ENCODE measurements at regions of chr1 and their contacts with region 1.

Region 1: GRCh38 chr1:14765773-14766172 is 167.3 kb downstream of the KAZN start:
- DNase-seq: peak; percentile 70
- H3K4me3 Mint-ChIP-seq: no peak overlapping the region
- H3K27ac Mint-ChIP-seq: peak overlapping the region; percentile 55
- H3K4me1 Mint-ChIP-seq: peaks cover 25% of the 10 kb centered on the region
- H3K27me3 Mint-ChIP-seq: no peaks in the 10 kb centered on the region
- CTCF ChIP-seq: no peak

Region 2: GRCh38 chr1:14742181-14742980 is 23.4 kb before region 1 on chr1:
- CTCF ChIA-PET with region 1: interaction called, 5 read pairs
- POLR2A ChIA-PET with region 1: interaction called, 13 read pairs
- intact Hi-C with region 1: no loop called
- DNase-seq: peak; percentile 97
- H3K4me3 Mint-ChIP-seq: peak overlapping the region; percentile 0
- H3K27ac Mint-ChIP-seq: peak overlapping the region; percentile 82
- H3K4me1 Mint-ChIP-seq: peaks cover 33% of the 10 kb centered on the region
- H3K27me3 Mint-ChIP-seq: no peaks in the 10 kb centered on the region
- CTCF ChIP-seq: no peak

Region 3: GRCh38 chr1:14778898-14779865 is 13.4 kb after region 1 on chr1:
- CTCF ChIA-PET with region 1: interaction called, 10 read pairs
- POLR2A ChIA-PET with region 1: interaction called, 3 read pairs
- intact Hi-C with region 1: no loop called
- DNase-seq: peak; percentile 58
- H3K4me3 Mint-ChIP-seq: no peak overlapping the region
- H3K27ac Mint-ChIP-seq: no peak overlapping the region
- H3K4me1 Mint-ChIP-seq: no peaks in the 10 kb centered on the region
- H3K27me3 Mint-ChIP-seq: no peaks in the 10 kb centered on the region
- CTCF ChIP-seq: peak; percentile 76